B cell (primary cell): ENCODE measurements at regions of chr10 and their contacts with region 1.

Region 1: DNA sequence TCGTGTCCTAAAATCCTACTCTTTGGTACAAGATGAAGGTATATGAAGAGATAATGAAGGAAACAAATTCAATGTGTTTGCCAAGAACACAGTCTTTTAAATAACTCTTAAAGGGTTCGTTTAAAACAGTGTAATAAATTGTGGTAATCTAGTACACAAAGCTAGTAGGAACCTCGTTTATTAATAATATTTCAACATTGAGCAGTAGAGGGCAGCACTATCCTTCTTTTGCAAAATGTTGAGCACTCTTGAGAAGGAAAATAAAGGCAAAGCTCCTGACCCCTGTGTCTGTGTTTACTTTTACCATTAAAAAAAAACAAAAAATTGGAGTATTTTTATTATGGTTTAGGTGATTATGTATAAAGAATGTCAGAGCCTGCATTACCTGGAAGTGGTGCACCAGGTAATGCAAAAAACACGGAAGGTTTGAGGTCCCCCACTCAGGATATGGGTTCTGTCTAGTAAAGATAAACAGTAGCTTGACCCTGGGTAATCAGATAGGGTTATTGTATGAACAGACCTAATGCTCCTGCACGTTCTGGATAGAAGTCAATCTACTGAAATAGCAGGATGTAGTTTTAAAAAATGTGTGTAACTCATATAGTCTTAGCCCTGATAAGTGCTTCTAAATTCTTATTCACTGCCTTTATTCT is 5.7 kb upstream of the GOT1 start:
- DNase-seq: peak; percentile 66
- ATAC-seq: peak; percentile 58
- H3K4me3 ChIP-seq: no peak overlapping the region
- H3K4me3 Mint-ChIP-seq: no peak overlapping the region
- H3K27ac ChIP-seq: no peak overlapping the region
- H3K27ac Mint-ChIP-seq: peak overlapping the region; percentile 26
- H3K4me1 ChIP-seq: peaks cover 7 to 8% of the 10 kb centered on the region in 2 donors
- H3K4me1 Mint-ChIP-seq: peaks cover 11% of the 10 kb centered on the region
- H3K27me3 ChIP-seq: no peaks in the 10 kb centered on the region
- H3K27me3 Mint-ChIP-seq: no peaks in the 10 kb centered on the region
- CTCF ChIP-seq: peak; percentile 79

Region 2: DNA sequence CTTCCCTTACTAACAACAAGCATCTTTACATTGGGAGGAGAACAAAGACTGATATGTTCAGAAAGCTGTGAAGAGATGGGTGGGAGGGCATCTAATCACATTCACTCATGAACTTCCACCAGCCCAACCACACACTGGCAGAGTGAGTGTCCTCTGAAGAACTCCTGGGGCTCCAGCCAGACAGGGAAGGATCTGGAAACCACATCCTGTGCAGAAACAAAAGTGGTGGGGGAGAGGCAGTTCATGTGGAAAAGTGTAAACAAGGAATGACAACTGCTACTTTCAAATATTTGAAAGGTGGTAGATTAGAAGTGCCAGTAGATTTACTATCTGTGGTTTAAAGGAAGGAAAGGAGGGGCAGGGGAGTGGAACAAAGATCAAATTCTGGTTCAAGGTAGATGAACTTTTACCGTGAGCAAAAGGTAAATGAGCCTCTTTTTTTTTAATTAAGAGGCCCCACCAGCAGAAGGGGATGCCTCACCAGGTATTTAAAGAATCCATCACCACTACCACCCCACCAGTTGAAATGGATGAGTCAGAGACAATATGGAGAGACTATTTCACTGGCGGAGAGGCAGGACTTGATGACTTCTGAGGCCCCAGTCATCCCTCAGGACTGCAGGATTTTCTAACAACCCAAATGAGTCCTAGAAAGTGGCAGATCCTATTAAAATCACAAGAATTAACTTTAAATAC is 40.2 kb before region 1 on chr10:
- CTCF ChIA-PET with region 1: interaction called, 16 read pairs
- POLR2A ChIA-PET with region 1: no interaction called
- intact Hi-C with region 1: loop called (anchors 1 kb)
- DNase-seq: no peak
- ATAC-seq: no peak
- H3K4me3 ChIP-seq: no peak overlapping the region
- H3K4me3 Mint-ChIP-seq: no peak overlapping the region
- H3K27ac ChIP-seq: no peak overlapping the region
- H3K27ac Mint-ChIP-seq: no peak overlapping the region
- H3K4me1 ChIP-seq: peaks cover 2 to 4% of the 10 kb centered on the region in 2 donors
- H3K4me1 Mint-ChIP-seq: peaks cover 1% of the 10 kb centered on the region
- H3K27me3 ChIP-seq: peaks cover 0 to 2% (median 0%) of the 10 kb centered on the region in 4 experiments
- H3K27me3 Mint-ChIP-seq: no peaks in the 10 kb centered on the region
- CTCF ChIP-seq: no peak

Region 3: GRCh38 chr10:99450624-99451498 is 14.7 kb after region 1 on chr10:
- CTCF ChIA-PET with region 1: interaction called, 11 read pairs
- POLR2A ChIA-PET with region 1: no interaction called
- intact Hi-C with region 1: no loop called
- DNase-seq: no peak
- ATAC-seq: no peak
- H3K4me3 ChIP-seq: no peak overlapping the region
- H3K4me3 Mint-ChIP-seq: no peak overlapping the region
- H3K27ac ChIP-seq: no peak overlapping the region
- H3K27ac Mint-ChIP-seq: no peak overlapping the region
- H3K4me1 ChIP-seq: no peaks in the 10 kb centered on the region
- H3K4me1 Mint-ChIP-seq: no peaks in the 10 kb centered on the region
- H3K27me3 ChIP-seq: peaks cover 0 to 5% (median under 1%) of the 10 kb centered on the region in 4 experiments
- H3K27me3 Mint-ChIP-seq: peaks cover 48% of the 10 kb centered on the region
- CTCF ChIP-seq: no peak

Region 4: DNA sequence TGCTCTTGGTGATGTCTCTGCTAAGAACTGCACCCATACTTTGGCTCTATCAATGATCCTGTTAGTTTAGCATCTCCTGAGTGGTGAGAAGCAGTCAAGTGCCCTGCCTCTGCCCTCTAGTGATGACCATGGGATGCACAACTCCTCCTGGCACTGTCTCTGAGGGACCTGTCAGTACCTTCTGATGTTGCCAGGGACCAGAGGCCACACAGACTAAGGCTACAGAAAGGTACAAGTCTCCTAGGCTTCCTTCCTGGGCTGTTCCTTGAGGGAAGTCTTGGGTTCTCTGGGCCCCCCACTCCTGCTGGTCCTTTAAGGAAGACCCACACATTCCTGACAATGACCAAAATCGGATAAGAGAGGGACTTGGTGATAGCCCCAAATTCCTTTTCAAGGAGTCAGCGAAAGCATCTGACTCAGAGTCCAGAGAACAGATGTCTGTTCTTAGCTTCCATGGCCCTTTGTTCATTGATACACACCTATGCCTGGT is 112.0 kb after region 1 on chr10:
- CTCF ChIA-PET with region 1: interaction called, 16 read pairs
- POLR2A ChIA-PET with region 1: no interaction called
- intact Hi-C with region 1: loop called (anchors 1 kb)
- DNase-seq: peak; percentile 27
- ATAC-seq: peak; percentile 43
- H3K4me3 ChIP-seq: no peak overlapping the region
- H3K4me3 Mint-ChIP-seq: no peak overlapping the region
- H3K27ac ChIP-seq: no peak overlapping the region
- H3K27ac Mint-ChIP-seq: no peak overlapping the region
- H3K4me1 ChIP-seq: no peaks in the 10 kb centered on the region
- H3K4me1 Mint-ChIP-seq: no peaks in the 10 kb centered on the region
- H3K27me3 ChIP-seq: peaks cover 0 to 31% (median 6%) of the 10 kb centered on the region in 4 experiments
- H3K27me3 Mint-ChIP-seq: peaks cover 69% of the 10 kb centered on the region
- CTCF ChIP-seq: peak; percentile 30

Region 5: DNA sequence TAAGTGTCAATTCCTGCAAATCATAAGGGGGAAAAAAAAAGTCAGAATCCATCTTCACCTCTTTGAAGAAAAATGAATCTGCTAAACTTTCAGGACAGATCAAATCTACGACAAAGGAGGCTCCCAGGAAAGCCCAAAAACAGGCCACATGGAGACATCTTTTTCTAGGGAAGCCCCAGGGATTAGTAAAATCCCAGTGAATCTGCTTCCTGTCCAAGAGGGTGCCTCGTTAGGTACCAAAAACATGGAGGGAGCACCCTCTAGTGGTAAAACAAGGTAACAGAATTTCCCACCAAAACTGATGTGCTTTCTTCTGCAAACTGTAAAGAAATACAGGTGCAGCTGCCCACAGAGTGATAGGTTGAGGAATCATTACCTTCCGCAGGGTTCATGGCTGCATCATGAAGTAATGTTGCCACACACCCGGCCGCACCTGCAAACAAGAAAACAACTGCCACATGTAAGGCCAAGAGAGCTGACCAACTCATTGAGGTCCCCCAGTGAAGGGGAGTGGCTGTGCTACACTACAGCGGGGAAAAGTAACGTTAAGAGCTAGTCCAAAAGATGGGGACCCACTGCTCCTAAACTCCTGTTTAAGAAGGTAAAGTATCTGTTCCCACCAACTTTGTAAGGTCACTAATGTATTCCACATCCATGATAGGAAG is 176.2 kb after region 1 on chr10:
- CTCF ChIA-PET with region 1: interaction called, 81 read pairs
- POLR2A ChIA-PET with region 1: no interaction called
- intact Hi-C with region 1: loop called (anchors 1 kb)
- DNase-seq: peak; percentile 76
- ATAC-seq: peak; percentile 47
- H3K4me3 ChIP-seq: no peak overlapping the region
- H3K4me3 Mint-ChIP-seq: no peak overlapping the region
- H3K27ac ChIP-seq: no peak overlapping the region
- H3K27ac Mint-ChIP-seq: peak overlapping the region; percentile 7
- H3K4me1 ChIP-seq: peaks cover 15 to 30% of the 10 kb centered on the region in 2 donors
- H3K4me1 Mint-ChIP-seq: peaks cover 55% of the 10 kb centered on the region
- H3K27me3 ChIP-seq: no peaks in the 10 kb centered on the region
- H3K27me3 Mint-ChIP-seq: no peaks in the 10 kb centered on the region
- CTCF ChIP-seq: peak; percentile 94